ENCODE measurements at regions of chr9 and their contacts with region 1.

Region 1: GRCh38 chr9:126335837-126336735 is 9.5 kb downstream of the MVB12B start:
- DNase-seq: no peak
- H3K4me3 ChIP-seq: no peak overlapping the region
- H3K27ac ChIP-seq: no peak overlapping the region
- H3K4me1 ChIP-seq: peaks cover 7 to 37% (median 12%) of the 10 kb centered on the region in 4 experiments
- H3K27me3 ChIP-seq: no peaks in the 10 kb centered on the region

Region 2: DNA sequence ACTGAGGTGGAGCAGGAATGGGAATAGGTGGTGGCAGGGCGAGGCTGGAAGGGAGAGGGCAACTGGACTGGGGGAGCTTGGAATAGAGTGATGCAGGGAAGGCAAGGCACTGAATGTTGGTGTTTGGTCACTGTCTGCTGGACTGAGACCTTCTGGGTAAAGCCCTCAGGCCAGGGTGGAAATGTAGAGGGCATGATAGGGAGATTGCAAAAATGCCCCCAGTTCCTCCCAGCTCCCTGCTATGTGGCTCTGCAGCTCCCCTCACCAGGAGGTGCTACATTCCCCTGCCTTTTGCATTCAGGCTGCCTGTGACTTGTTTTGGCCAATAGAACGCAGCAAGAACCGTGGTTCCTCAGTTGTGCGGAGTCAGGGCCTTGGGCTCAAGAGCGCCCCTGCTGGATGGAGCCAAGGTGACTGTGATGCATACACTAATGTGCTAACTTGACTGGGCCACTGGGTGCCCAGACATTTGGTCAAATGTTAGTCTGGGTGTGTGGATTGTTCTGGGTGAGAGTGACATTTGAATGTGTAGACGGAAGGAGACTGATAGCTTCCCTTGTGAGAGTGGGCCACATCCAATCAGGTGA is 132.9 kb before region 1 on chr9:
- CTCF ChIA-PET with region 1: no interaction called
- POLR2A ChIA-PET with region 1: no interaction called
- DNase-seq: peak in 1 of 3 donors; percentile 21
- H3K4me3 ChIP-seq: no peak overlapping the region
- H3K27ac ChIP-seq: no peak overlapping the region
- H3K4me1 ChIP-seq: peaks cover 0 to 29% (median 12%) of the 10 kb centered on the region in 4 experiments
- H3K27me3 ChIP-seq: no peaks in the 10 kb centered on the region

Region 3: DNA sequence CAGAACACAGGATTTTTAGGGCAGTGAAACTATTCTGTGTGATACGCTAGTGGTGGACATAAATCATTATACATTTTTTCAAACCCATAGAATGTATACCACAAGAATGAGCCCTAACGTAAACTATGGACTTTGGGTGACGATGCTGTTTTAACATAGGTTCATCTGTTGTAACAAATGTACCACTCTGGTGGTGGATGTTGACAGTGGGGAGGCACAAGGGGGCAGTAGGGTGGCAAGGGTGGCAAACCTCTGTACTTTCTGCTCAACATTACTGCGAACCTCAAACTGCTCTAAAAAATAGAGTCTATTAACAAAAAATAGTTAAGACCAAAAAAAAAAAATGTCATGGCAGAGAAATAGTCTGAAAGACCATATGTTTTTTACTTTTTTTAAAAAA is 18.6 kb before region 1 on chr9:
- CTCF ChIA-PET with region 1: interaction called, 14 read pairs
- POLR2A ChIA-PET with region 1: no interaction called
- DNase-seq: peak; percentile 56 to 84 (median 81)
- H3K4me3 ChIP-seq: no peak overlapping the region
- H3K27ac ChIP-seq: no peak overlapping the region
- H3K4me1 ChIP-seq: peaks cover 0 to 4% (median 0%) of the 10 kb centered on the region in 4 experiments
- H3K27me3 ChIP-seq: no peaks in the 10 kb centered on the region